H1 (cell line): ENCODE measurements at regions of chr16 and their contacts with region 1.

Region 1: DNA sequence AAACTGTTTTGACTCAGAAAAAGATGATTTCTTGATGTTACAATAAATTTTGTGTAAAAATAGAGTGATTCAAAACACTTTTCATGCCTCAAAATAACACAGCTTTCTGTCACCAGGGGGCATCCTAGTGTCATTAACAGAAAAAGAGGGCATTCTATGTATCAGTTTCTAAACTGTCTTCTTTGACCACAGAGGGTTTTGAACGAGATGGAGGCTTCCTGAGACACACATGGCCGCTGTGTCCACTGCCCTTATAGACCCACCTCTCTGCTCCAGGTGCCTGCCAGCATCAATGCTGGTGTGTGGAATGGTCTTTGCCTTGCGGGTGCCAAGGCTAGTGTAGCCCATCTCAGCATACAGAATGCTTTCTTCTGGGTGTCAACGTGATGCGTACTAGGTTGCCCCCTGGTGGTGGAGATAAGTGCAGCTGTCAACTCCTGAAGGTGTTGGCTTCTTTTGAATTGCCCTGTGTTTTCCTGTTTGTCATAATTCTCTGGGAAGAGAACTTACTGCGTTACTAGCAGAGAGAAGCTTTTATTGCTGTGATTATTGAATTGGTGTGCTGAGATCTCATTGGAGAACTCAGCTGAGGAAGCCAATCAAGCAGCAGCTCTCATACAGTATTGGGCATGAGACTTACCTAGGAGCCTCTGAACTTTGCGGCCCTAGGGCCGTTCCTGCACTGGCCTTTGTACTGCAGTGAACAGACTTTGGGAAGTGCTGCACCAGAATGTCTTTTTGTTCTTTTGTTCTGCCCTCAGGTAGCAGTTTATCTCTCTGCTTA is 38.6 kb downstream of the USP10 start:
- DNase-seq: peak in 1 of 2 experiments; percentile 91
- H3K4me3 ChIP-seq: no peak overlapping the region
- H3K27ac ChIP-seq: no peak overlapping the region
- H3K4me1 ChIP-seq: peaks cover 7 to 22% (median 16%) of the 10 kb centered on the region in 4 experiments
- H3K27me3 ChIP-seq: no peaks in the 10 kb centered on the region
- CTCF ChIP-seq: peak; percentile 85 to 91 (median 86)
- EP300 ChIP-seq: no peak
- POLR2A ChIP-seq: no peak
- RAD21 ChIP-seq: peak; percentile 43 to 64

Region 2: GRCh38 chr16:84647828-84648594 is 90.4 kb before region 1 on chr16 and contains the start of gene KLHL36:
- CTCF ChIA-PET with region 1: interaction called, 10 read pairs
- POLR2A ChIA-PET with region 1: interaction called, 4 read pairs
- DNase-seq: peak in 1 of 2 experiments; percentile 69
- H3K4me3 ChIP-seq: peak within 1 kb of the TSS; percentile 55 to 71 (median 62)
- H3K27ac ChIP-seq: no peak within 1 kb of the TSS
- H3K4me1 ChIP-seq: peaks cover 0 to 4% (median 2%) of the 10 kb centered on the region in 4 experiments; a peak in 4 of 7 replicates
- H3K27me3 ChIP-seq: peaks cover 0 to 13% (median 9%) of the 10 kb centered on the region in 4 experiments; a peak in 4 of 7 replicates
- CTCF ChIP-seq: no peak
- EP300 ChIP-seq: no peak
- POLR2A ChIP-seq: no peak
- RAD21 ChIP-seq: no peak
- total RNA-seq, gene KLHL36: 33.6 and 35.3 TPM in 2 replicates

Region 3: GRCh38 chr16:84672276-84673202 is 65.9 kb before region 1 on chr16:
- CTCF ChIA-PET with region 1: interaction called, 45 read pairs
- POLR2A ChIA-PET with region 1: no interaction called
- DNase-seq: peak; percentile 57 to 96
- H3K4me3 ChIP-seq: no peak overlapping the region
- H3K27ac ChIP-seq: no peak overlapping the region
- H3K4me1 ChIP-seq: peaks cover 0 to 13% (median 6%) of the 10 kb centered on the region in 4 experiments; a peak in 5 of 7 replicates
- H3K27me3 ChIP-seq: no peaks in the 10 kb centered on the region
- CTCF ChIP-seq: peak; percentile 92 to 95 (median 95)
- EP300 ChIP-seq: no peak
- POLR2A ChIP-seq: no peak
- RAD21 ChIP-seq: peak; percentile 65 to 76

Region 4: GRCh38 chr16:84714028-84714427 is 24.4 kb before region 1 on chr16:
- CTCF ChIA-PET with region 1: interaction called, 23 read pairs
- POLR2A ChIA-PET with region 1: interaction called, 4 read pairs
- DNase-seq: peak in 1 of 2 experiments; percentile 50
- H3K4me3 ChIP-seq: no peak overlapping the region
- H3K27ac ChIP-seq: no peak overlapping the region
- H3K4me1 ChIP-seq: peaks cover 2 to 24% (median 19%) of the 10 kb centered on the region in 4 experiments
- H3K27me3 ChIP-seq: no peaks in the 10 kb centered on the region
- CTCF ChIP-seq: no peak
- EP300 ChIP-seq: no peak
- POLR2A ChIP-seq: no peak
- RAD21 ChIP-seq: no peak

Region 5: GRCh38 chr16:84726079-84726668 is 12.3 kb before region 1 on chr16:
- CTCF ChIA-PET with region 1: interaction called, 120 read pairs
- POLR2A ChIA-PET with region 1: interaction called, 7 read pairs
- DNase-seq: peak; percentile 36 to 93
- H3K4me3 ChIP-seq: peak overlapping the region in 1 of 4 experiments; percentile 37; a peak in 1 of 8 replicates
- H3K27ac ChIP-seq: no peak overlapping the region
- H3K4me1 ChIP-seq: peaks cover 5 to 20% (median 15%) of the 10 kb centered on the region in 4 experiments; a peak in 5 of 7 replicates
- H3K27me3 ChIP-seq: no peaks in the 10 kb centered on the region
- CTCF ChIP-seq: peak; percentile 81 to 93 (median 85)
- EP300 ChIP-seq: no peak
- POLR2A ChIP-seq: no peak
- RAD21 ChIP-seq: peak; percentile 88 to 89

Region 6: DNA sequence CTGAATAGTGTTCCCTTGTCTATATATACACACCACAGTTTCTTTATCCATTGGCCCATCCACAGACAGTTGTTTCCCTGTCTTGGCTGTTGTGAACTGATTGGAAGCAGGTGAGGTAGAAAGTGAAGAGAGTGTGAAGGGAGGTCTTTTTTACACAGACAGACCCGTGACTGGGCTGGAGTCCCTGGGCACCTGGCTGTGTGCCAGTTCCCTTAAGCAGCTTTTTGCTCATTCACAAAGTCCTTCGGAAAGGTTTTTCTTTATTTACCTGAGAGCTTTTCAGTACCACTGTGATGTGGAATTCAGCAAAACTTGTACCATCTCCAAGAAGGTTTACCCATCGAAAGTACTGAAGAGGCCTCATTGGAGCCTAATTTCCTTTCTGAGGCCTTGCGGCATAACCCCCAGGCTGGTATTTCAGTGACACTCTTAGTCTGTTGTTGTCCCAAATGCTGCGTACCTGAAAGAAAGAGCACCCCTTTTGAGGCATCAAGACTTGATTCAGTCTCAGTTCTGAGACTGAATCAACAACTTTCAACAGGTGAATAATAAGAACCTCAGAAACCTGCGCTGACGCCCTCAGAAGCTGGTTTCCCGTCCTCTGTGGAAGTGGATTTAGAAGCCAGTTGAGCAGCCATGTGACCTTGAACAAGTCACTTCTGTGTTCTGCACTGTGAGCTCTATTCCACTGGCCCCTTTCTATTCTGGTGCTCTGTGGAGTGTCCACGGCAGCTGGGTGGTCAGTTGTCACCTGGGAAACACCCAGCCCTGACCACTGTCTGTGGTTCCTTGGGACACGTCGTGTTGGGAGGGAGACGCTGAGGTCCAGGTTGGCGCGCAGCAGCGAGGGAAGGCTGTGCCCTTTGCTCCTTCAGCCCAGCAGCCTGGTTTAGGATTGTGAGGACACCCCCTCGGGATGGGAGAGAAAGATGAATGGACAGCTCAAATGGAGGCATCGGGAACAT is 27.5 kb after region 1 on chr16:
- CTCF ChIA-PET with region 1: interaction called, 19 read pairs
- POLR2A ChIA-PET with region 1: interaction called, 3 read pairs
- DNase-seq: no peak
- H3K4me3 ChIP-seq: no peak overlapping the region
- H3K27ac ChIP-seq: peak overlapping the region; percentile 20; the same call in 1 of the 2 replicates
- H3K4me1 ChIP-seq: no peaks in the 10 kb centered on the region
- H3K27me3 ChIP-seq: no peaks in the 10 kb centered on the region
- CTCF ChIP-seq: no peak
- EP300 ChIP-seq: no peak
- POLR2A ChIP-seq: no peak; a peak in 1 of 3 replicates
- RAD21 ChIP-seq: no peak